Spleen (tissue), 13 donors: ENCODE measurements at regions of chr10 and their contacts with region 1.

Region 1: DNA sequence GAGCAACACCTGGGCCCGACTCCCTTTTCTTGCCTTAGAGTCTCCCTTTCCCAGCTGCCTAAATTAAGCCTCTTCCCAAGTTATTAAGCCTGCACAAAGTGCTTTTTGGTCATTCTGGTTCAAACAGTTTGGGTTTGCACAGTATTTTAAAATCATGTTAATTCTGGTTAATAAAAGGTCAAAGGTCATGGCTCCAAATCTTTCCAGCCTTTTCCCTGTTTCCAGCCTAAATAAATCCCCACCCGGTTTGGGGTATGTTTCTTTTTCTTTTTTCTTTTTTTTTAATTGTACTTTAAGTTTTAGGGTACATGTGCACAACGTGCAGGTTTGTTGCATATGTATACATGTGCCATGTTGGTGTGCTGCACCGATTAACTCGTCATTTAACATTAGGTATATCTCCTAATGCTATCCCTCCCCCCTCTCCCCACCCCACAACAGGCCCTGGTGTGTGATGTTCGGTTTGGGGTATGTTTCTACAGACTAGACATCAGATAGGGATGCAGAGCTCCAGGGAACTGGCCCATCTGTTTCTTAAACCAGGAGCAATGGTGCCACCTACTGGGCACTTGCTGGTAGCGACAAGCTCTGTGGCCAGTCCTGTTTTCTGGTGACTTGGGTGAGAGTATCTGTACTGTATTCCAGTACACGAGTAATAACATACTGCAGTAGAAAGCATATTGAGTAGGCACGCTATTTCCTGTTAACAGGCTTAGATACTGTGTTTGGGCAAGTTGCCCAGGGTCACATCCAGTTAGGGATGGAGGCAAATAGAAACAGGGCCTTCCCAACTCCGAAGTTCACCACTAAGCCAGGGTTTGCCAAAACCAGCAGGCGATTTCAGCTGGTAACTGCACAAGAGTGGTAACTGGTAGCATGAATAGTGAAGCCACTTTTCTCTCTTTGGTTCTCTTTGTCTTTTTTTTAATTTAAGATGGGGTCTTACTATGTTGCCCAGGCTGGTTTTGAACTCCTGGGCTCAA is 60.6 kb upstream of the TRIM8 start:
- DNase-seq: peak; percentile 92
- H3K4me3 ChIP-seq: no peak overlapping the region
- H3K27ac ChIP-seq: peak overlapping the region in 3 of 8 donors; percentile 38 to 67 (median 47)
- H3K4me1 ChIP-seq: peaks cover 3 to 49% (median 32%) of the 10 kb centered on the region in 6 donors
- H3K27me3 ChIP-seq: no peaks in the 10 kb centered on the region
- CTCF ChIP-seq: peak; percentile 78 to 95 (median 90)
- POLR2A ChIP-seq: no peak

Region 2: GRCh38 chr10:102090772-102091171 is 493.0 kb before region 1 on chr10:
- intact Hi-C with region 1: no loop called
- DNase-seq: no peak
- H3K4me3 ChIP-seq: no peak overlapping the region
- H3K27ac ChIP-seq: no peak overlapping the region
- H3K4me1 ChIP-seq: no peaks in the 10 kb centered on the region
- H3K27me3 ChIP-seq: no peaks in the 10 kb centered on the region
- CTCF ChIP-seq: no peak
- POLR2A ChIP-seq: no peak

Region 3: DNA sequence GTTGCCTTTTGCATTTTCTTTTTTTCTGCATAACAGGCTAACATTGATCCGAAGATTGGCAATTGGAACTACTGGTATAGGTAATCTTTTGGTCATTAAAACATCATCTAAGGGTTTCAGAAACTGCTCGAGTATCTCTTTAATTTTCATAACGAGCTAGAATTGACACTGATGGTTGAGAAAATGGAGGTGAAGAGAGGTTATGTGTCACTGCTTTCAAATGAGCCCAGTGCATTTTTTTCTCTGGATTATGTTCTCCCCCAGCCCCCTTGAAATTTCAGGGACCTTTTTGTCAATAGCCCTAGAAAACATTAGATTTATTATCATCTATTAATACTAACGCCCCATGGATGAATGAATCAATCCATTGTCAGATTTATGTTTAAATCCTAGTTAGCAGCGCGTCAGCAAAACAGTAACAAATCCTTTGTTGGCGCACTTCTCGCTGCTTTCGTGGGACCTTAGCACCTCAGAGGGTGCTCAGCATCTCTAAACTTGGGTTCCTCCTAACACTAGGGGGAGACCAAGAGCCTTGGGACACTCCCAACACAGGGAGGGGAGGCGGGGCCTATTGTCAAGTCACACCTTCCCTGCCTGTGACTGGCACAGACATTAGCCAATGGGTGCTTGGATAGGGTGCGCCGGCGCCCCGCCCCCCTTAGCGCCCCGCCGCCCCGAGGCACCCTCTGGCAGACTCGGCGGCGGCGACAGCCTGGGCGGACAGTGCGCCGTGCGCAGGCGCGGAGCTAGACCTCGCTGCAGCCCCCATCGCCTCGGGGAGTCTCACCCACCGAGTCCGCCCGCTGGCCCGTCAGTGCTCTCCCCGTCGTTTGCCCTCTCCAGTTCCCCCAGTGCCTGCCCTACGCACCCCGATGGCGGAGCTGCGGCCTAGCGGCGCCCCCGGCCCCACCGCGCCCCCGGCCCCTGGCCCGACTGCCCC is 80.2 kb before region 1 on chr10 and contains the start of gene SUFU:
- intact Hi-C with region 1: loop called (anchors 5 kb)
- DNase-seq: peak; percentile 99
- H3K4me3 ChIP-seq: peak within 1 kb of the TSS; percentile 76 to 98 (median 92)
- H3K27ac ChIP-seq: peak within 1 kb of the TSS; percentile 74 to 97 (median 93)
- H3K4me1 ChIP-seq: peaks cover 30 to 87% (median 61%) of the 10 kb centered on the region in 6 donors
- H3K27me3 ChIP-seq: no peaks in the 10 kb centered on the region
- CTCF ChIP-seq: peak; percentile 85 to 97 (median 94)
- POLR2A ChIP-seq: peak in 1 of 3 donors; percentile 47
- total RNA-seq, gene SUFU: 11.4 to 21.9 (median 15.1) TPM

Region 4: DNA sequence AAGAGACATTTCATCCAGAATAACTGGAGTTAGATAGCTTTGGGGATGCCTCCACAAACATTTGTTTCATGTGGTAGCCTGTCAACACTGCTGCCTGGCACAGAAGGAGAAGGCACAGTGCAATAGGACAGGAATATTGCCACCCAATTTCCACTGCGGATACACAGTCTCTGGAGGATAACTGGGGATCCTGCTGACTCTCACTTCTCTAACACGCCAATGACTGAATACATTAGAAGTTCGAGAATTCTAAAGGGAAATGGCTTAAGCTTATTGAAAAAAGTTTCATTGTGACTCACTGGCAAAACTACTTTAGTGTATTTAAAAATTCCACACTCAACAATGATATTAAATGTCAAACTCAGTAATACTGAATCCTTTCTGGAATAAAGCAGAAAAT is 117.5 kb after region 1 on chr10:
- intact Hi-C with region 1: no loop called
- DNase-seq: no peak
- H3K4me3 ChIP-seq: no peak overlapping the region
- H3K27ac ChIP-seq: no peak overlapping the region
- H3K4me1 ChIP-seq: peaks cover 0 to 15% (median 3%) of the 10 kb centered on the region in 6 donors
- H3K27me3 ChIP-seq: no peaks in the 10 kb centered on the region
- CTCF ChIP-seq: no peak
- POLR2A ChIP-seq: no peak